ENCODE measurements at regions of chr9 and their contacts with region 1.

Region 1: GRCh38 chr9:37582548-37583157 is 6.5 kb upstream of the FBXO10 start:
- DNase-seq: peak; percentile 42
- ATAC-seq: peak; percentile 71
- H3K4me3 ChIP-seq: no peak overlapping the region
- H3K27ac ChIP-seq: no peak overlapping the region
- H3K4me1 ChIP-seq: no peaks in the 10 kb centered on the region
- H3K27me3 ChIP-seq: no peaks in the 10 kb centered on the region
- CTCF ChIP-seq: peak; percentile 34 to 73 (median 57); a peak in 5 of 6 replicates
- POLR2A ChIP-seq: no peak
- RAD21 ChIP-seq: peak; percentile 65

Region 2: DNA sequence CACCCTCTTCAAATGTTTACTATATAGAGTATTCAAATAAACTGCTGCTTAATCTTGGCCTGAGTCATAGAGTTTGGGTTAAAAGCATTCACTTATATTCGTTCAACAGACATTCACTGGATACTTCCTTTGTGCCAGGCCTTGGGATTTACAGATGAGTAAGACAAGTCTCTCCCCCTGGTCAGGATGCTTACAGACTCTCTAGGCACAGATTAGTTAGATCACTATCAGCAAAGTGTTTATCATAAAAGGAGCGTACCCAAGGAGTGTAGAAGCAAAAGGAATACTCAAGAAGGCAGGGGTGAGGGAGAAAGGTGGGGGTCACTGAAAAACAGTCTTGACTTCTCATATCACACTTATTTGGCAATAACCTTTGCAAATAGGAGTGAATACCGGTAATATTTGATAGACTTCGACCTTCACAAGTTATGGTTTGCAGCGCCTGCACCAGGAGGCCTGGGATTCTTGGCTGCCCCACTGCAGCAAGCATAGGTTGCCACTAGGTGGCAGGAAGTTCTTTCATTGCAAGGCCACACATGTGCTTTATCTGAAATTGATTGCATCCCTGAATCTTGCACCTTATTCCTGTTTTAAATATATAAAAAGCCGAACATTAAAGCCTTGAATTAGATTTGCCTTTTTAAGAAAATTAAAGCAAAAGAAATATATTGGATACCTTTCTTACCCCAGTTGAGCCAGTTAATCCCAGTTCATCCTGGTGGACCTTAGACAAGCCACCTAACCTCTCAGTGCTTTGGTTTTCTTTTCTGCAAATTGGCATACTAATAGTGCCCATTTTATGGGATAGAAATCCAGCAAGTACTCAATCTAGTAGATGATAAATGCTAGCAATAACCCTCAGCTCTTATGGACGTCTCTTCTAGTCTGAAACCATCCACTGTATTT is 164.4 kb after region 1 on chr9:
- CTCF ChIA-PET with region 1: no interaction called
- POLR2A ChIA-PET with region 1: no interaction called
- RAD21 ChIA-PET with region 1: no interaction called
- intact Hi-C with region 1: loop called (anchors 5 kb)
- DNase-seq: peak; percentile 59
- ATAC-seq: peak; percentile 96
- H3K4me3 ChIP-seq: no peak overlapping the region
- H3K27ac ChIP-seq: no peak overlapping the region
- H3K4me1 ChIP-seq: no peaks in the 10 kb centered on the region
- H3K27me3 ChIP-seq: no peaks in the 10 kb centered on the region
- CTCF ChIP-seq: peak; percentile 92 to 96 (median 94)
- POLR2A ChIP-seq: no peak
- RAD21 ChIP-seq: peak; percentile 88

Region 3: DNA sequence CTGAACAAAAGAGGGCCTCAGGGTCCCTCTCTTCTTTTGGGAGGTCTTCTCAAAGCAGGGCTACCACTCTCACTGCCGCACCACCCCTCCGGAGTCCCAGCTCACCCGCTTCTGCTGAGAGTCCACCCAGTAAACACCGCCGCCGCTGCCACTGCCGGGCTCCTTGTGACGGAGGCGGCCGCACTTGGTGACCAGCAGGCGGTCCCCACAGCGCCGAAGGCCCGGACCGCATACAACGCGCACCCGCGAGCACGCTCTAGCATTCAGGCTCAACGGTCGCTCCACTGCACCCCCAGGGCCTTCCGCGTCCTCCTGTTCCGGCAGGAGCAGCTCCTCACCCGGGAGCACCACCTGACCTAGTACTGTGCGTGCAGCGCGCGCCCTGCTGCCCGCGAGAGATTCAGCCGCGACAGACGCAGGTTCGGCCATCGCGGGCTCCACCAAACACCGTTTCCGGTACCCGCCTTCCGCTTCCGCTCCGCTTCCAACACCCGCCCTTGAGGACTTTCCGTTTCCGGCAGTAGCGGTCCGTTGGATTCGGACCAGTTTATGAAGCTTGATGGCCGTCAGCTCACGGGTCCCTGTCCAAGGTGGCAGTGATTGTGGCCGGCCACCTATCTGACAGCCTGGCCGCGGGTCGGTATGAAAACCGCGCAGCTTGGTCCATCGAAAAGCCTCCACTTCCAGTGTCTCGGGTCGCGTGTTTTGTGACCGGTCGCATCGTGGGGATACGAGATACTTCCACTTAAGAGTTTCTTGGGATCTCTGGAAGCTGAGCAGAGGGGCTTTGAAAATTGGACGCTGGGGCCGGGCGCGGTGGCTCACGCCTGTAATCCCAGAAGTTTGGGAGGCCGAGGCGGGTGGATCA is 202.2 kb after region 1 on chr9 and contains the start of gene EXOSC3:
- CTCF ChIA-PET with region 1: no interaction called
- POLR2A ChIA-PET with region 1: no interaction called
- RAD21 ChIA-PET with region 1: no interaction called
- intact Hi-C with region 1: loop called (anchors 10 kb)
- DNase-seq: peak; percentile 88
- ATAC-seq: peak; percentile 89
- H3K4me3 ChIP-seq: peak within 1 kb of the TSS; percentile 88 to 99
- H3K27ac ChIP-seq: peak within 1 kb of the TSS; percentile 71
- H3K4me1 ChIP-seq: peaks cover 7 to 11% of the 10 kb centered on the region in 2 experiments; a peak in 3 of 4 replicates
- H3K27me3 ChIP-seq: no peaks in the 10 kb centered on the region
- CTCF ChIP-seq: no peak
- POLR2A ChIP-seq: peak; percentile 65
- RAD21 ChIP-seq: no peak
- total RNA-seq, gene EXOSC3: 79.6 TPM

Region 4: DNA sequence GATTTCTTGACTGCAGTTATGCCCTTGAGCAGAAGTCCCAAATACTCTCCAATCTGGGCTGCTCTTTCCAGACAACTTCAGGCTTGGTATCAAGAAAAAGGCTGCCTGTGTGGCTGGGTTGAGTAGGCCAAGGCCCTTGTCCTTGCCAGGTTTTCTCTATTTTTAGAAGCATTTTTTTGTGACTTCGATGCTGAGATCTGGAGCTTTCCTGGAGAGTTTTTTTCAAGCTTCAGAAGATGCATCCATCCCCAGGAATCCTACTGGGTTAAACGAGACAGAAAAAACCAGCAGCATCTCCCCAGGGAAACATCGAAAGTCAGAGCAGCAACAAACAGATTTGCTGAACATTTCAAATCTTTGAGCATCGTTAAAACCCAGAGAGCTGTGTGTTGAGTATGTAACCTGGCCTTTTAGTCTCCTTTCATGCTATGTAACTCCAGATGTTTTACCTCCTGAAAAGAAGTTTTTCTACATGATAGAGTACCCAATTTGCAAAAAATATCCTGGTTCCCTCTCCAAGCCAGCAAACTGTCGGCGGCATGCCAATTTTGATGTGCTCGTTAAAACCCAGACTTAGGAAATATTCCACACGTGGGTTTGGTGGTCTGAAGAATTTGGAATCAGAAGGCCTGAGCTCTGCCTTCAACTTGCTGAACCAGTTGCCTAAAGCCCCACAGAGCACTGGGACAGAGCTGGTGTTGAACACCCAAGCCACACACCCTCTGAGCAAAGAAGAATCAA is 711.7 kb after region 1 on chr9:
- CTCF ChIA-PET with region 1: no interaction called
- POLR2A ChIA-PET with region 1: no interaction called
- RAD21 ChIA-PET with region 1: no interaction called
- intact Hi-C with region 1: no loop called
- DNase-seq: no peak
- ATAC-seq: no peak
- H3K4me3 ChIP-seq: no peak overlapping the region
- H3K27ac ChIP-seq: no peak overlapping the region
- H3K4me1 ChIP-seq: no peaks in the 10 kb centered on the region
- H3K27me3 ChIP-seq: 0 out of 2 replicates have a peak, but pooled peaks cover 4% of the 10 kb centered on the region
- CTCF ChIP-seq: no peak
- POLR2A ChIP-seq: no peak
- RAD21 ChIP-seq: no peak

Region 5: DNA sequence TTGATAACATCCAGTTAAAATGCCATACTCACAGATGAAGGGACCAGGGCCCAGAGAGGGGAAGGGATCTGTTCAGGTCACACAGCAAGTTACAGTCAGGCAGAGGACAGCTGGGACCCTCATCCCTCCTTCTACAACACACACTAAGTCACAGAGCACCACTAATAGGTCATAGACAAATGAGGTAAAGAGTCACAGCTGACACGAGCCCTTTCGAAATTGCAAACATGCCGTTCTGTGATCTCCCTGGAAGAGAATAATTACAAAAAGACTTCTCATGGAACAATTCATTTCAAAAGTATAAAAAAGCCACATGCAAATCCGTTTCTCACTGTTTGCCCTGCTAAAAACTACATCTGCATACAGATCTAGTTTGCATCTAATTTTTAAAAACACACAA is 826.1 kb after region 1 on chr9:
- CTCF ChIA-PET with region 1: no interaction called
- POLR2A ChIA-PET with region 1: no interaction called
- RAD21 ChIA-PET with region 1: no interaction called
- intact Hi-C with region 1: loop called (anchors 10 kb)
- DNase-seq: no peak
- ATAC-seq: no peak
- H3K4me3 ChIP-seq: no peak overlapping the region
- H3K27ac ChIP-seq: no peak overlapping the region
- H3K4me1 ChIP-seq: no peaks in the 10 kb centered on the region
- H3K27me3 ChIP-seq: peaks cover 34% of the 10 kb centered on the region
- CTCF ChIP-seq: no peak
- POLR2A ChIP-seq: no peak
- RAD21 ChIP-seq: no peak

Measured in HCT116 (cell line).